ENCODE measurements at regions of chr14 and their contacts with region 1.

Region 1: DNA sequence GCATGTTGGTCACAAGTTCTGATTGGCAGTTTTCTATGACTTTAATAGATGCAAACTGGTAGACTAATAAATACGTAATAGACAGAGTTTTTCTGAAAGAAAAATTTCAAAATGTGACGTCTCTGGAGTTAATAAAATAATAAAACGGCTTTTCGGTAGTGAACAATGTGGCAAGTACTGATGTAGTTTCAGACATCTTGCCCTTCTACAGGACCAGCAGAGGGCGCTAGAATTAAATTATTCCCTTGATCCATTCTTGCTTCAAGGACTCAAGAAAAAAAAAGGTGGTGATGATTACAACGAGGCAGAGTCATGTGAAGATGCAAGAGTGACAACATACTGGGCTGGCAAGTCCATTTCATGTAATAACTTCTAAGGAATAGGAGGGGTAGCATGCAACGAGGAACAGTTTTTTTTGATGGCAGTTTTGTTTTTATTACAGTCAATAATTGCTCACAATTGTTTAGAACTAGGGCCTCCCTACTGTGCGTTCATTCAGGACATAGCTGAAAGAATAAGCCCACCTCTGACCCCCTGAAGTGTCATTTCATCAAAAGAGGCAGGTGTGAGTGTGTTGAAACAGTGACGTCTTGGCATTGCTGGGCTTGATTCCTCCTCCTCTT is 101.0 kb upstream of the GZMB start:
- DNase-seq: peak in 3 of 5 donors; percentile 30 to 44 (median 39)
- ATAC-seq: peak in 3 of 4 donors; percentile 61 to 72 (median 71)
- H3K4me3 ChIP-seq: no peak overlapping the region
- H3K27ac ChIP-seq: no peak overlapping the region
- H3K4me1 ChIP-seq: no peaks in the 10 kb centered on the region
- H3K27me3 ChIP-seq: no peaks in the 10 kb centered on the region
- CTCF ChIP-seq: peak; percentile 65 to 92 (median 82)
- POLR2A ChIP-seq: no peak

Region 2: DNA sequence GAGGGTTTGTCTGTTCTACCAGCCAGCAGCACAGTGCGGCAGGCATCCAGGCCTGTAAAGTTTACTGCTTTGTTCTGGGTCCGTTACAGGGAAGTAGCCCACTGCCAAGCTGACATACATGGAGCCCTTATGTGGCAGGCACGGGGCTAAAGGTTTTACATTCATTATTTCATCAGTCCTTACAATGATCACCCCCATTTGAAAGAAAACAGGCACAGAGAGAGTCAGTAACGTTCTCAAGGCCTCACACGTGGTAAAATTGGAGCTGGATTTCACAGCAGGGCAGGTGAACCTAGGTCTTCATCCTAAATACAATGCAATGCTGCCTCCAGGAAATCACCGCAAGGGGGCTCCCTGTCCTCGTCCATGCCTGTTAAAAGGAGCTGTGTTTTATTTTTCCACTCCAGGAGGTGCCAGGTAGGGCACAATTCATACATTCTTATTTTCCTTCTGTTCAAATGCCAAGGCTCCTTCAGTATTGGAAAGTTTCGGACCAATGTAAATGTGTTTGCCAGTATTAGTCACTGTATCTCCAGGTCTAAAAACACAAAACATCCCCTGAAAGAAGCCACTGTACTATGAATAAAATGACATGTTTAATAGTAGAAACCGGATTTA is 71.2 kb after region 1 on chr14:
- intact Hi-C with region 1: loop called in 3 of 10 experiments (anchors 5 to 10 kb)
- DNase-seq: peak; percentile 62 to 78 (median 69)
- ATAC-seq: peak; percentile 46 to 80 (median 76)
- H3K4me3 ChIP-seq: no peak overlapping the region
- H3K27ac ChIP-seq: no peak overlapping the region
- H3K4me1 ChIP-seq: peaks cover 0 to 34% (median 15%) of the 10 kb centered on the region in 12 donors
- H3K27me3 ChIP-seq: no peaks in the 10 kb centered on the region
- CTCF ChIP-seq: peak; percentile 71 to 93 (median 84)
- POLR2A ChIP-seq: no peak

Region 3: GRCh38 chr14:25042362-25043299 is 307.6 kb after region 1 on chr14:
- intact Hi-C with region 1: loop called (anchors 2 to 10 kb)
- DNase-seq: peak in 3 of 5 donors; percentile 28 to 35 (median 33)
- ATAC-seq: peak in 2 of 4 donors; percentile 32 to 39
- H3K4me3 ChIP-seq: no peak overlapping the region
- H3K27ac ChIP-seq: peak overlapping the region in 3 of 12 donors; percentile 1 to 27 (median 13)
- H3K4me1 ChIP-seq: peaks cover 0 to 76% (median 16%) of the 10 kb centered on the region in 12 donors
- H3K27me3 ChIP-seq: no peaks in the 10 kb centered on the region
- CTCF ChIP-seq: peak; percentile 15 to 67 (median 54)
- POLR2A ChIP-seq: no peak

Region 4: DNA sequence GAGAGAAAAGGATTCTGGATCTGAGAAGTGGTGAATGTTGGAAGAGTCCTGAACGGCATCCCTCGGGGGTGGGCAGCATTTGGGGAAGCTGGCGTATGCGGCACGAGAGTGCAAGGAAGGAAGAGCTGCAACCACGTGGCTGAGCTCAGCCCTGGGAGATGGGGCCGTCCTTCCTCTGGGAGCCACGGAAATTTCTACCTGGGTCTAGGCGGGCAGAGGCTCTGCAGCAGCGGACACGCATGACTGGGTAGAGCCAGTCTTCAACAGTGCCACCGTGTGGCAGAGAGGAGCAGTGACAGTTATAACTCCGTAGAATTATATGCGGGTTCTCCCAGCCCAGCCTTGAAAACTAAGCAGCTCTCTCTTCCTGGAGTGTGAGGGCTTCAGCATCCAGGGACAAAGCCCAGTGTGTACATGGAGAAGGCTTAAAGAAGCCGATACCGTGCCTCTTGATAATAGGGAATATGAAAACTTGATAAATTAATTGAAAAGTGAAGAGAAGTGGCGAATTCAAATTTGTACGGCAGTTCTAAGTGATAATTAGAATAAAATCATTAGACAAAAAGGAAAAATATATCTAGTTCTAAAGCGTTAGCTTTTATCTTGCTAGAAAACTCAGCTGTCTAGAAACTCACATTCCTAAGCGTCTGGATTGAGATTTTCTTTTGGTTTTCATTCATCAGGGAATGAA is 397.9 kb after region 1 on chr14:
- intact Hi-C with region 1: loop called in 7 of 10 experiments (anchors 1 to 5 kb)
- DNase-seq: peak; percentile 53 to 76 (median 69)
- ATAC-seq: peak; percentile 90 to 97 (median 96)
- H3K4me3 ChIP-seq: peak overlapping the region in 1 of 12 donors; percentile 16
- H3K27ac ChIP-seq: no peak overlapping the region
- H3K4me1 ChIP-seq: peaks cover 0 to 6% (median 2%) of the 10 kb centered on the region in 12 donors
- H3K27me3 ChIP-seq: peaks cover 0 to 47% (median 3%) of the 10 kb centered on the region in 9 donors
- CTCF ChIP-seq: peak; percentile 66 to 94 (median 87)
- POLR2A ChIP-seq: no peak

Region 5: GRCh38 chr14:25150934-25151790 is 416.2 kb after region 1 on chr14:
- intact Hi-C with region 1: loop called (anchors 1 to 5 kb)
- DNase-seq: no peak
- ATAC-seq: peak in 1 of 4 donors; percentile 45
- H3K4me3 ChIP-seq: no peak overlapping the region
- H3K27ac ChIP-seq: no peak overlapping the region
- H3K4me1 ChIP-seq: no peaks in the 10 kb centered on the region
- H3K27me3 ChIP-seq: no peaks in the 10 kb centered on the region
- CTCF ChIP-seq: peak; percentile 75 to 90 (median 85)
- POLR2A ChIP-seq: no peak

Region 6: DNA sequence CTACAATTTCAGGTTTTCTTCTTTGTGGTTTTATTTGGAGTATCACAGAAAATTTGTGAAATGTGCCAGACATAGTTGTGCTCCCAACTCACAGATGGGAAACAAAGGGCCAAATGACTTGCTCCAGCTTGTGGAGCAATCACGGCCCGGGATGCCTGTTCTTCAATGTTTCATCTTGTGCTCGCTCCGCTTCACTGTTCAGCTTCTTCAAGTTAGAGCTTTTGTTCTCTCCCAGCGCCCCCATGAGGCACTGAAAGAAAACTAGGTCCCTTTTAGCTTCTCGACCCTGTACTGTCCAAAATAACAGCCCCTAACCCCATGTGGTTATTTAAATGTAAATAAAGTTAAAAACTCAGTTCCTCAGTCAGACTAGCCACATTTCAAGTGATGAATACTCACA is 502.9 kb after region 1 on chr14:
- intact Hi-C with region 1: loop called in 2 of 10 experiments (anchors 10 kb)
- DNase-seq: no peak
- ATAC-seq: peak in 2 of 4 donors; percentile 47 to 49
- H3K4me3 ChIP-seq: no peak overlapping the region
- H3K27ac ChIP-seq: no peak overlapping the region
- H3K4me1 ChIP-seq: peaks cover 0 to 4% (median 0%) of the 10 kb centered on the region in 12 donors
- H3K27me3 ChIP-seq: peaks cover 0 to 6% (median 0%) of the 10 kb centered on the region in 9 donors
- CTCF ChIP-seq: peak in 7 of 12 donors; percentile 9 to 37 (median 25)
- POLR2A ChIP-seq: no peak

Region 7: DNA sequence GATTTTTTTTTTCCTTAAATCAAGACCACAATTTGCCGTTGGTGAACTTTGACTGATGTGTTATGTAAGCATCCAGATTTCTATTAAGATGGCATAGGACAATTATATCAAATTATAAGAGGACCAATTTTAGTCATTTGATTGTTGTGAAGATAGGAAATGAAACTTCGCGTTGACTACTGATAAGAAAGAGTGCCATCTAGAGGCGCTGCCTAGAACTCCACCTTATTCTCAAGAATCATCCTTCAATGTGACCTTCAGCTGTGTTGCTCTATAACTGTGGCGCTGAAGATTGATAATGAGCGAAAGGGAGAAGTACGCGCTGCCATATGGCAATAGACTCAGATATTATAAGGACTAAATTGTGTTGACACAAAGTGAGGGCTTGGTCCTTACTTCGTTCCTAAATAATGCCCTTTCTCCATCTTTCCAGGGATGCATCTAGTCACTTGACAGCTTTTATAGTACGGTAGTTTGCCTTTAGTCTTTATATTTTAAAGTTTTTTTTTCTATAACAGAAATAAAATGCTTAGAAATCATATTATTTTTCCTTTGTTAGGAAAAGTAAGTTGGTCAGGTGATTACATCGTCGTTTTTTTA is 665.7 kb after region 1 on chr14:
- intact Hi-C with region 1: loop called in 2 of 10 experiments (anchors 10 kb)
- DNase-seq: peak in 1 of 5 donors; percentile 22
- ATAC-seq: no peak
- H3K4me3 ChIP-seq: no peak overlapping the region
- H3K27ac ChIP-seq: no peak overlapping the region
- H3K4me1 ChIP-seq: no peaks in the 10 kb centered on the region
- H3K27me3 ChIP-seq: peaks cover 0 to 4% (median 0%) of the 10 kb centered on the region in 9 donors
- CTCF ChIP-seq: peak; percentile 49 to 77 (median 72)
- POLR2A ChIP-seq: no peak

Measured in heart left ventricle (tissue), 16 donors.